Mammary epithelial cell (primary cell): ENCODE measurements at regions of chr15 and their contacts with region 1.

Region 1: GRCh38 chr15:71800835-71801745 is 9.3 kb upstream of the NR2E3 start:
- DNase-seq: peak; percentile 54
- H3K4me3 ChIP-seq: no peak overlapping the region
- H3K27ac ChIP-seq: no peak overlapping the region
- H3K4me1 ChIP-seq: peaks cover 7% of the 10 kb centered on the region
- H3K27me3 ChIP-seq: no peaks in the 10 kb centered on the region
- CTCF ChIP-seq: peak; percentile 84 to 86

Region 2: DNA sequence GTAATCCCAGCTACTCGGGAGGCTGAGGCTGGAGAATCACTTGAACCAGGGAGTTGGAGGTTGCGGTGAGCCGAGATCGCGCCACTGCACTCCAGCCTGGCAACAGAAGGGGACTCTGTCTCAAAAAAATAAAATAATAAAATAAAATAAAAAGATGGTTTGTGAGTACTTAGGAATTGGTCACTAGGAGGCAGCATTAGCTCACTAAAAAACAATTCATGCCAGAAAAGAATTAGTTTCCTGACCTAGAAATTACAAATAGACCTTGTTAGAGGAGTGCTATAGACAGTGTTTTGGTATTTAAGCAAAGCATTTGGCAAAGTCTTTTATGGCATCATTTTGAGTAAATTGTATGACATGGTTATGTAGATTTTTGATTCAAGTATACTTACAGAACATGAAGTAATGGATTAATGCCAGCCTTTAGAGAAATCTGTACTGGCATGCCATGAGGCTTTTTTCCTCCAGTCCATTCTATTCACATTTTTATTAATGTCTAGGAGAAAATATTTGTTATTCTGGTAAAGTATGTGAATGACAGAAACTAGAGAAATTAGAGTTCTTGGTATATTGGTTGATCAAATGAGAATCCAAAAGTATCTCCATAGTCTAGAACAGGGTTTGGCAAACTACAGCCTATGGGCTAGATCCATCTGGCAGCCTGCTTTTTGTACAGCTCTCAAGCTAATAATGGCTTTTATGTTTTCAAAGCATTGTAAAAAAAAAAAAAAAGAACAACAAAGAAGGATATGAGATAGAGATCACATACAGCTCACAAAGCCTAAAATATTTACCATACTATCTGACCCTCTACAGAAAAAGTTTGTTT is 826.9 kb before region 1 on chr15:
- CTCF ChIA-PET with region 1: no interaction called
- dilution Hi-C with region 1: no loop called
- in situ Hi-C with region 1: no loop called
- intact Hi-C with region 1: loop called (anchors 2 kb)
- DNase-seq: peak; percentile 36
- H3K4me3 ChIP-seq: no peak overlapping the region
- H3K27ac ChIP-seq: no peak overlapping the region
- H3K4me1 ChIP-seq: no peaks in the 10 kb centered on the region
- H3K27me3 ChIP-seq: no peaks in the 10 kb centered on the region
- CTCF ChIP-seq: peak; percentile 16 to 49

Region 3: DNA sequence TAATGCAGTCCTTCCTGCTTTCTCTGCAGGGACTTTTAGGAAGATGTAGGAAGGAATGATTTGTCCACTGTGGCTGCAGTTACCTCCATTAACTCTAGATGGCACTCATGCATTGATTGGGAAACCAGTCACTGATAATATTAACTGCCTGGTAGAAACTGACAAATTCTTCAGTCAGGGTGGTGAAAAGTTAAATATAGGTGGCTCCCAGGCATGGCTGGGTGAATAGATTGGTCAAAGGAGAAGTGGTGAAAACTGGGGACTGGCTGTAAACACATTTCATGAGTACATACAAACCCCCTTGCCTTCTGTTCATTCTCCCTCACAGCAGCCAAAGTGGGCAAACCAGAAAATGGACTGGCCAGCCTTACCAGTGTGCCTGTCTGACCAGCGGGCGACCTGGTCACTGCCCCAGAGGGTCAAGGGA is 352.4 kb before region 1 on chr15:
- CTCF ChIA-PET with region 1: no interaction called
- dilution Hi-C with region 1: no loop called
- in situ Hi-C with region 1: loop called in 1 of 2 experiments (anchors 10 kb)
- intact Hi-C with region 1: loop called (anchors 1 kb)
- DNase-seq: peak; percentile 73
- H3K4me3 ChIP-seq: no peak overlapping the region
- H3K27ac ChIP-seq: peak overlapping the region; percentile 99
- H3K4me1 ChIP-seq: peaks cover 49% of the 10 kb centered on the region
- H3K27me3 ChIP-seq: no peaks in the 10 kb centered on the region
- CTCF ChIP-seq: peak; percentile 93 to 98

Region 4: DNA sequence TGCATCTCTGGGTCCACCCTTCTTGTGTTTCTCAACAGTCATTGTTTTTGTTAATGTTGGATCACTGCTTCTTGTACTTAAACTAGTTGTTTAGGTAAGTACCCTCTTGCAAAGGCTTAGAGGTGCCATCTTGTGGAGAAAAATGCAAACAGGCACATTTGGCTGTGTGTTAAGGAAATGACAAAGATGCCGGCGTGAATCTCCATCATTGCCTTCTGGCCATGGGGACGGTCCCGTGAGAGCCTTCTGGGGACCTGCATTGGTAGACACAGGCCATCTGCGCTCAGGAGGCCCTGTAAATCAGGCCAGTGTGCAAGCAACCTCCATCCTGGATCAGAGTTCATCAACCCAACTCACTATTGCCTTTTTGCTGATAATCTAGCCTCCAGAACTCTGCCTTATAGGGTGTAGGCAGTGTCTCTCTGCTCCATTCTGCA is 149.3 kb before region 1 on chr15:
- CTCF ChIA-PET with region 1: no interaction called
- dilution Hi-C with region 1: no loop called
- in situ Hi-C with region 1: no loop called
- intact Hi-C with region 1: loop called (anchors 5 kb)
- DNase-seq: peak; percentile 65
- H3K4me3 ChIP-seq: no peak overlapping the region
- H3K27ac ChIP-seq: no peak overlapping the region
- H3K4me1 ChIP-seq: peaks cover 8% of the 10 kb centered on the region
- H3K27me3 ChIP-seq: no peaks in the 10 kb centered on the region
- CTCF ChIP-seq: peak; percentile 51 to 77

Region 5: GRCh38 chr15:71752604-71753289 is 48.3 kb before region 1 on chr15:
- CTCF ChIA-PET with region 1: no interaction called
- dilution Hi-C with region 1: no loop called
- in situ Hi-C with region 1: no loop called
- intact Hi-C with region 1: loop called (anchors 2 kb)
- DNase-seq: peak; percentile 53
- H3K4me3 ChIP-seq: no peak overlapping the region
- H3K27ac ChIP-seq: no peak overlapping the region
- H3K4me1 ChIP-seq: peaks cover 29% of the 10 kb centered on the region
- H3K27me3 ChIP-seq: no peaks in the 10 kb centered on the region
- CTCF ChIP-seq: peak; percentile 41 to 42